ENCODE measurements at regions of chr7 and their contacts with region 1.

Region 1: GRCh38 chr7:84194543-84195271 is at the start of gene SEMA3A:
- ATAC-seq: peak; percentile 79 to 91 (median 88)
- H3K4me3 ChIP-seq: peak within 1 kb of the TSS; percentile 39 to 53 (median 48)
- H3K27ac ChIP-seq: peak within 1 kb of the TSS in 1 of 2 donors; percentile 10
- H3K4me1 ChIP-seq: peaks cover 7 to 17% of the 10 kb centered on the region in 2 donors
- total RNA-seq, gene SEMA3A: 8.9 to 100 (median 16.4) TPM

Region 2: DNA sequence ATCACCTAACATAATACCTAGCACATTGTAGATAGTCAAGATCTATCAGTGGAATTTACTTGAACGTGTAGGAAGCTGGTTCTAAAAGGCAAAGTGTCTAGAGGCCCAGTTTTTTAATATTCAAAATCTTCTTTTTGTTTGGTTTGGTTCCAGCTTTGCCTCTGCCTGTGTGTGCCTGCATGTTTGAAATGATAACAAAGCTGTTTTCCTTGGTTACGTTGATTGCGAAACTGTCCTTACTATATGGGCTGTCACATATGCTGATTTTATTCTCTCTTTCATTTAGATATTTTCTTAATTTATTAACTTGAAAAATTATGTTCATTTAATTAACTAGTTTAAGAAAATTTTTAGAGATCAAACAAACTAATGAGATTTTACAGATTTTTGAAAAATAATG is 237.4 kb before region 1 on chr7:
- in situ Hi-C with region 1: loop called in 2 of 9 experiments (anchors 25 kb)
- ATAC-seq: peak in 2 of 8 experiments; percentile 36 to 65
- H3K4me3 ChIP-seq: no peak overlapping the region
- H3K27ac ChIP-seq: no peak overlapping the region
- H3K4me1 ChIP-seq: no peaks in the 10 kb centered on the region